AG04450 (cell line): ENCODE measurements at regions of chr1 and their contacts with region 1.

Region 1: GRCh38 chr1:68120136-68120791 is 69.8 kb upstream of the DIRAS3 start:
- DNase-seq: peak; percentile 74
- H3K4me3 ChIP-seq: no peak overlapping the region
- H3K27ac ChIP-seq: no peak overlapping the region
- H3K27me3 ChIP-seq: no peaks in the 10 kb centered on the region
- CTCF ChIP-seq: peak; percentile 85

Region 2: GRCh38 chr1:67789551-67789950 is 330.7 kb before region 1 on chr1:
- CTCF ChIA-PET with region 1: no interaction called
- POLR2A ChIA-PET with region 1: no interaction called
- DNase-seq: no peak
- H3K4me3 ChIP-seq: no peak overlapping the region
- H3K27ac ChIP-seq: no peak overlapping the region
- H3K27me3 ChIP-seq: no peaks in the 10 kb centered on the region
- CTCF ChIP-seq: no peak

Region 3: GRCh38 chr1:68103884-68104554 is 16.2 kb before region 1 on chr1:
- CTCF ChIA-PET with region 1: interaction called, 17 read pairs
- POLR2A ChIA-PET with region 1: no interaction called
- DNase-seq: peak; percentile 71
- H3K4me3 ChIP-seq: no peak overlapping the region
- H3K27ac ChIP-seq: peak overlapping the region; percentile 91
- H3K27me3 ChIP-seq: no peaks in the 10 kb centered on the region
- CTCF ChIP-seq: no peak

Region 4: GRCh38 chr1:68173911-68174737 is 53.9 kb after region 1 on chr1:
- CTCF ChIA-PET with region 1: interaction called, 12 read pairs
- POLR2A ChIA-PET with region 1: no interaction called
- DNase-seq: peak; percentile 94
- H3K4me3 ChIP-seq: peak overlapping the region; percentile 38
- H3K27ac ChIP-seq: peak overlapping the region; percentile 92
- H3K27me3 ChIP-seq: no peaks in the 10 kb centered on the region
- CTCF ChIP-seq: no peak

Region 5: GRCh38 chr1:68232354-68233148 is 112.3 kb after region 1 on chr1 and contains the start of gene WLS:
- CTCF ChIA-PET with region 1: interaction called, 32 read pairs
- POLR2A ChIA-PET with region 1: interaction called, 19 read pairs
- DNase-seq: peak; percentile 60
- H3K4me3 ChIP-seq: peak within 1 kb of the TSS; percentile 76
- H3K27ac ChIP-seq: peak within 1 kb of the TSS; percentile 73
- H3K27me3 ChIP-seq: no peaks in the 10 kb centered on the region
- CTCF ChIP-seq: peak; percentile 27; the same call in 1 of the 2 replicates
- polyA plus RNA-seq, gene WLS: 391 and 417 TPM in 2 replicates

Region 6: DNA sequence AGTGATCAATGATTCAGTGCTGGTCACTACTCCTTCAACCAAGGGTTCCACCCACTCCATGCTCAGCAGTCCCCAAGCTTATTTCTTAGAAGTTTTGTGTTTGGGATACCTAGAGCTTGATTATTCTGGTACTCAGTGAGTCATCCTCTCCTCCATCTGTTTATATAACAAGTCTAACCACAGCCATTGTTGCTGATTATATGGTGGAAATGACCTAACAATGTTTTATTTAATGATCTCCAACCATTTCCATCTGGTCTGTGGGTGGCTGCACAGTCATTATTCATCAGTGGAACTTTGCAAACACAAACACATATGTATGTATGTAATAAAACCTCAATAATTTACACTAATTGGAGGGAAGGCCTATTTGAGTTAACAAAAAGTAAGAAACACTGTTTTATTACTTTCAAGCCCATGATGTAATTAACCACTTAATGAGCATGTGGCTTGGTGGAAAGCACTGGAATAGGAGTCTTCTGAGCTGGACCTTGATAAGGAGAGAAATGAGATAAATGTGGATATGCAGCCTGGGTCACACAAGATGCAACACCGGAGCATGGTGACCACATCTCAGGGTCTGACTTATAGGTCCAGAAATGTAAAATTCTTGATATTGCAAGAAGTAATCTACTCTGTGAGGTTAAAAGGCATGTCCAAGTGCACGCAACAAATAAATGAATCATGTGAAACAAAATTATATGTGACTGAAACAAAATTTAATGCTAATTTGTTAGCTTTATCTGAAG is 211.0 kb after region 1 on chr1:
- CTCF ChIA-PET with region 1: interaction called, 473 read pairs
- POLR2A ChIA-PET with region 1: interaction called, 3 read pairs
- DNase-seq: peak; percentile 84
- H3K4me3 ChIP-seq: no peak overlapping the region
- H3K27ac ChIP-seq: peak overlapping the region; percentile 54
- H3K27me3 ChIP-seq: no peaks in the 10 kb centered on the region
- CTCF ChIP-seq: no peak

Region 7: GRCh38 chr1:68378296-68379084 is 258.2 kb after region 1 on chr1:
- CTCF ChIA-PET with region 1: interaction called, 27 read pairs
- POLR2A ChIA-PET with region 1: no interaction called
- DNase-seq: no peak
- H3K4me3 ChIP-seq: no peak overlapping the region
- H3K27ac ChIP-seq: no peak overlapping the region
- H3K27me3 ChIP-seq: no peaks in the 10 kb centered on the region
- CTCF ChIP-seq: no peak